ENCODE measurements at regions of chr4 and their contacts with region 1.

Region 1: GRCh38 chr4:102344954-102345794 is at the start of gene SLC39A8:
- DNase-seq: peak; percentile 85 to 90
- H3K4me3 ChIP-seq: peak within 1 kb of the TSS; percentile 42
- H3K4me3 Mint-ChIP-seq: peak within 1 kb of the TSS; percentile 81
- H3K27ac Mint-ChIP-seq: peak within 1 kb of the TSS; percentile 45
- H3K4me1 ChIP-seq: peaks cover 19% of the 10 kb centered on the region; the same call in 1 of the 2 replicates
- H3K4me1 Mint-ChIP-seq: peaks cover 9% of the 10 kb centered on the region
- H3K27me3 ChIP-seq: no peaks in the 10 kb centered on the region; the same call in 1 of the 2 replicates
- H3K27me3 Mint-ChIP-seq: peaks cover 7% of the 10 kb centered on the region
- CTCF ChIP-seq: peak; percentile 73
- total RNA-seq, gene SLC39A8: 14.1 and 15.5 TPM in 2 replicates

Region 2: DNA sequence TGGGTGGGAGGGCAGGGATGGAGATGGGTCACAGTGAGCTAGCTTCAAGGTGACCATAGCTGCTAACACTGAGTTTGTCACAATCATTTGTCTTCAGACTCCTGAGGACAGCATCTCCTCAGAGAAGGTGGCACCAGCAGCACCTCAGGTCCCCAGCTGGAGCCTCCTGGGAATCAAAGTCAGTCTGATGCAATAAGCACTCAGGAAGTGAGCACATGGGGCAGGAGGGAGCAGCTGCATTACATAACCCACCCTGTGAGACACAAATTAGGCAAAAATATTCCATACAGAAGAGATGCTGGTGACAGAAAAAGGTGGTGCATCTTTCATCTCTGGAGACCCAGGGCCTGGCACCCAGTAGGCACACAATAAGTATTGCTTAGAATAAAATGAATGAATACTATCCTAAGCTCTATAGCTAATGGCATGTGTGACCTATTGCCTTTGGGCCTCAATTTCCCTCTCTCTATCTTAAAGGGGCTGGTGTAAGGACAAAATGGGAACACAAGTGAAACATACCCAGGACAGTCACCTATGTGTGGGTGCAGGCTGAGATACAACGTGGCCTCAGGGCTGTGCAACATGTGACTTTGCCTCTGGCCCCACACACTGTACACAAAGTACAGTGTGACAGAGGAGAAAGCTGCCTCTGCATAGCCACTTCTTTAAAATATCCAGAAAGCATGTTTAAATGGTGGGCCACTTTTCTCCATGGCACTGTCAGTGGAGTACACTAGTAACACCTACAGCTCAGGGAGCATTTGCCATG is 37.0 kb before region 1 on chr4:
- CTCF ChIA-PET with region 1: no interaction called
- POLR2A ChIA-PET with region 1: no interaction called
- intact Hi-C with region 1: loop called (anchors 2 kb)
- DNase-seq: no peak
- H3K4me3 ChIP-seq: no peak overlapping the region
- H3K4me3 Mint-ChIP-seq: no peak overlapping the region
- H3K27ac Mint-ChIP-seq: no peak overlapping the region
- H3K4me1 ChIP-seq: no peaks in the 10 kb centered on the region
- H3K4me1 Mint-ChIP-seq: no peaks in the 10 kb centered on the region
- H3K27me3 ChIP-seq: no peaks in the 10 kb centered on the region
- H3K27me3 Mint-ChIP-seq: no peaks in the 10 kb centered on the region
- CTCF ChIP-seq: no peak

Region 3: DNA sequence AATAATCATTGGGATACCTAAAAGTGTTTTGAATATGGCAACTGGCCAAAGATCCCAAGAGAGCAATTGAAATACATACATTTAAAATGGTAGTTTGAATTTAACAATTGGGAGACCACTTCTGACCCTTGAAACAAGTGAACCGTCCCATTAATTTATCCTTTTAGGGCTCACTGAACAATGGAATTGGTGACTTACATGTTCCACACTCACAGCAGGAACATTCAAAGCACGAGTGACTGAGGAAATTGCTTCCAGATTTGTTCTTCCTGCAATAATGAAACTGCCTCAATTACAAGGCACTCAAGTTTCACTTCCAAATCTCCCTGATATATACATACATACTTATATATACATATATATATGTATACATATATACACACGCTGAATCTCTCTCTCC is 20.4 kb before region 1 on chr4:
- CTCF ChIA-PET with region 1: interaction called, 3 read pairs
- POLR2A ChIA-PET with region 1: interaction called, 10 read pairs
- intact Hi-C with region 1: no loop called
- DNase-seq: no peak
- H3K4me3 ChIP-seq: no peak overlapping the region
- H3K4me3 Mint-ChIP-seq: no peak overlapping the region
- H3K27ac Mint-ChIP-seq: no peak overlapping the region
- H3K4me1 ChIP-seq: no peaks in the 10 kb centered on the region
- H3K4me1 Mint-ChIP-seq: no peaks in the 10 kb centered on the region
- H3K27me3 ChIP-seq: no peaks in the 10 kb centered on the region
- H3K27me3 Mint-ChIP-seq: no peaks in the 10 kb centered on the region
- CTCF ChIP-seq: no peak

Region 4: GRCh38 chr4:102430461-102430910 is 85.3 kb after region 1 on chr4:
- CTCF ChIA-PET with region 1: interaction called, 13 read pairs
- POLR2A ChIA-PET with region 1: no interaction called
- intact Hi-C with region 1: loop called (anchors 1 kb)
- DNase-seq: no peak
- H3K4me3 ChIP-seq: peak overlapping the region; percentile 41
- H3K4me3 Mint-ChIP-seq: peak overlapping the region; percentile 82
- H3K27ac Mint-ChIP-seq: peak overlapping the region; percentile 77
- H3K4me1 ChIP-seq: peaks cover 5% of the 10 kb centered on the region; the same call in 1 of the 2 replicates
- H3K4me1 Mint-ChIP-seq: peaks cover 10% of the 10 kb centered on the region
- H3K27me3 ChIP-seq: no peaks in the 10 kb centered on the region
- H3K27me3 Mint-ChIP-seq: no peaks in the 10 kb centered on the region
- CTCF ChIP-seq: no peak

Region 5: GRCh38 chr4:102500696-102501446 is 155.7 kb after region 1 on chr4 and contains the start of gene NFKB1:
- CTCF ChIA-PET with region 1: no interaction called
- POLR2A ChIA-PET with region 1: no interaction called
- intact Hi-C with region 1: loop called (anchors 10 kb)
- DNase-seq: peak in 1 of 2 experiments; percentile 25
- H3K4me3 ChIP-seq: peak within 1 kb of the TSS; percentile 72
- H3K4me3 Mint-ChIP-seq: peak within 1 kb of the TSS; percentile 95
- H3K27ac Mint-ChIP-seq: peak within 1 kb of the TSS; percentile 96
- H3K4me1 ChIP-seq: peaks cover 18% of the 10 kb centered on the region; the same call in 1 of the 2 replicates
- H3K4me1 Mint-ChIP-seq: peaks cover 31% of the 10 kb centered on the region
- H3K27me3 ChIP-seq: no peaks in the 10 kb centered on the region
- H3K27me3 Mint-ChIP-seq: no peaks in the 10 kb centered on the region
- CTCF ChIP-seq: no peak
- total RNA-seq, gene NFKB1: 33.0 and 39.8 TPM in 2 replicates

Region 6: GRCh38 chr4:103019308-103020124 is 674.3 kb after region 1 on chr4 and contains the start of gene SLC9B1:
- CTCF ChIA-PET with region 1: no interaction called
- POLR2A ChIA-PET with region 1: no interaction called
- intact Hi-C with region 1: loop called (anchors 10 kb)
- DNase-seq: peak; percentile 95 to 97
- H3K4me3 ChIP-seq: peak within 1 kb of the TSS; percentile 49
- H3K4me3 Mint-ChIP-seq: peak within 1 kb of the TSS; percentile 99
- H3K27ac Mint-ChIP-seq: peak within 1 kb of the TSS; percentile 99
- H3K4me1 ChIP-seq: no peaks in the 10 kb centered on the region
- H3K4me1 Mint-ChIP-seq: peaks cover 8% of the 10 kb centered on the region
- H3K27me3 ChIP-seq: no peaks in the 10 kb centered on the region
- H3K27me3 Mint-ChIP-seq: no peaks in the 10 kb centered on the region
- CTCF ChIP-seq: no peak
- total RNA-seq, gene SLC9B1: 1.7 TPM in 1 of 2 replicates, not detected in the other

Measured in Caco-2 (cell line).